B cell (primary cell): ENCODE measurements at regions of chr11 and their contacts with region 1.

Region 1: DNA sequence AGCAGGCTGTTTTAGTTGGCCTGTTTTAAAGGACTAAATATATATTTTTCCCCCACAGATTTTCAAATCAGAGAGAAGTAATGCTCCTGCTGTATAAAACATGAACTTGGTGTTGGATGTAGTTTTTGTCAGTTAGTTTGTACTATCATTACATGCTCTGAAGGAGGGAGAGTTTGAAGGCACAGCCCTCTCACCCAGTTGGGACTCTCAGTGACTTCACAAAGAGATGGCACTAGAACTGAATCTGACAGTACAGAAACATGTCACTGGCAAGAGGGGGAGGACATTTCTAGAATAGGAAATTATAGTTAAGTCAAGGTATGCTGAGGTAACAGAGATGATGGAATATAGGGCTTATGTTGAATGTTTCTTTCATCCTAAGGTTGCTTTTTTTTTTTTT is 21.0 kb upstream of the C1QTNF4 start:
- DNase-seq: no peak
- ATAC-seq: no peak
- H3K4me3 ChIP-seq: no peak overlapping the region
- H3K4me3 Mint-ChIP-seq: no peak overlapping the region
- H3K27ac ChIP-seq: no peak overlapping the region
- H3K27ac Mint-ChIP-seq: no peak overlapping the region
- H3K4me1 ChIP-seq: peaks cover 12 to 16% of the 10 kb centered on the region in 2 donors
- H3K4me1 Mint-ChIP-seq: peaks cover 15% of the 10 kb centered on the region
- H3K27me3 ChIP-seq: no peaks in the 10 kb centered on the region
- H3K27me3 Mint-ChIP-seq: no peaks in the 10 kb centered on the region
- CTCF ChIP-seq: no peak

Region 2: GRCh38 chr11:47477323-47477722 is 137.9 kb before region 1 on chr11:
- CTCF ChIA-PET with region 1: no interaction called
- POLR2A ChIA-PET with region 1: interaction called, 13 read pairs
- intact Hi-C with region 1: no loop called
- DNase-seq: no peak
- ATAC-seq: no peak
- H3K4me3 ChIP-seq: no peak overlapping the region
- H3K4me3 Mint-ChIP-seq: no peak overlapping the region
- H3K27ac ChIP-seq: no peak overlapping the region
- H3K27ac Mint-ChIP-seq: peak overlapping the region; percentile 39
- H3K4me1 ChIP-seq: no peaks in the 10 kb centered on the region
- H3K4me1 Mint-ChIP-seq: no peaks in the 10 kb centered on the region
- H3K27me3 ChIP-seq: no peaks in the 10 kb centered on the region
- H3K27me3 Mint-ChIP-seq: no peaks in the 10 kb centered on the region
- CTCF ChIP-seq: no peak